ENCODE measurements at regions of chr3 and their contacts with region 1.

Region 1: DNA sequence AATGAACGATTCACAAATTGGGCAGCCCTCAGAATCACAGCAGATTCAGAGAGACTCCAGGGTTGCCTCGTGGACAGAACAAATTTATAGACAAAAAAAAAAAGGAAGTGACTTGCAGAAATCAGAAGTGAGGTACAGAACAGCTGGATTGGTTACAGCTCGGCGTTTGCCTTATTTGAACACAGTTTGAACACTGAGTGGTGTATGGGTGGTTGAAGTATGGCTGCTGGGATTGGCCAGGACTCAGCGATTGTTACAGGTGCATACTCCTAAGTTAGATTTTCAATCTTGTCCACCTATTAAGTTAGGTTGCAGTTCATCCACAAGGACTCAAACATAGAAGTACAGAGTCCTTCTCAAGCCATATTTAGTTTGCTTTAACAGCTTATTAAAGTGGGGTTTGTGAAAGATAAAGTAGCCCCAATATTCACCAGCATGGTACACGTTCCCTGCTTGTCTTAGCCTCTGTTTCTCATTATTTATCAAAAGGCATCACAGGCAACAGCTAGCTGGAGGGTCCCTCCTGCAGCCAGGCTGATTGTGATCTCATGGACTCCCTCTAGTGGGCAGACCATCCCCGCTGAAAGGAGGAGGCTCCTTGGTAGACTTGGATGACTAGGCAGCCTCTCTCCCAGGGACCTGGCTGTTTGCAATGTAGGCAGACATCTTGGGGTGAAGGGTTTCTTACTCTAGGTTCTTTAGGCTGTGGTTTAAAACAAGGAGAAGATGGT is 17.6 kb upstream of the ALDH1L1 start:
- DNase-seq: no peak
- ATAC-seq: peak; percentile 96
- H3K4me3 ChIP-seq: no peak overlapping the region
- H3K27ac ChIP-seq: no peak overlapping the region
- H3K4me1 ChIP-seq: no peaks in the 10 kb centered on the region
- H3K27me3 ChIP-seq: no peaks in the 10 kb centered on the region; a peak in 2 of 4 replicates
- CTCF ChIP-seq: peak; percentile 67 to 75 (median 75)
- EP300 ChIP-seq: no peak
- POLR2A ChIP-seq: no peak
- RAD21 ChIP-seq: peak; percentile 67

Region 2: GRCh38 chr3:125967138-125967537 is 230.9 kb before region 1 on chr3:
- CTCF ChIA-PET with region 1: interaction called, 10 read pairs
- POLR2A ChIA-PET with region 1: no interaction called
- RAD21 ChIA-PET with region 1: no interaction called
- SMC1A ChIA-PET with region 1: no interaction called
- in situ Hi-C with region 1: no loop called
- intact Hi-C with region 1: loop called (anchors 10 kb)
- DNase-seq: no peak
- ATAC-seq: no peak
- H3K4me3 ChIP-seq: no peak overlapping the region
- H3K27ac ChIP-seq: no peak overlapping the region
- H3K4me1 ChIP-seq: no peaks in the 10 kb centered on the region
- H3K27me3 ChIP-seq: peaks cover 0 to 4% of the 10 kb centered on the region in 2 experiments; a peak in 2 of 4 replicates
- CTCF ChIP-seq: no peak
- EP300 ChIP-seq: no peak
- POLR2A ChIP-seq: no peak
- RAD21 ChIP-seq: no peak

Region 3: DNA sequence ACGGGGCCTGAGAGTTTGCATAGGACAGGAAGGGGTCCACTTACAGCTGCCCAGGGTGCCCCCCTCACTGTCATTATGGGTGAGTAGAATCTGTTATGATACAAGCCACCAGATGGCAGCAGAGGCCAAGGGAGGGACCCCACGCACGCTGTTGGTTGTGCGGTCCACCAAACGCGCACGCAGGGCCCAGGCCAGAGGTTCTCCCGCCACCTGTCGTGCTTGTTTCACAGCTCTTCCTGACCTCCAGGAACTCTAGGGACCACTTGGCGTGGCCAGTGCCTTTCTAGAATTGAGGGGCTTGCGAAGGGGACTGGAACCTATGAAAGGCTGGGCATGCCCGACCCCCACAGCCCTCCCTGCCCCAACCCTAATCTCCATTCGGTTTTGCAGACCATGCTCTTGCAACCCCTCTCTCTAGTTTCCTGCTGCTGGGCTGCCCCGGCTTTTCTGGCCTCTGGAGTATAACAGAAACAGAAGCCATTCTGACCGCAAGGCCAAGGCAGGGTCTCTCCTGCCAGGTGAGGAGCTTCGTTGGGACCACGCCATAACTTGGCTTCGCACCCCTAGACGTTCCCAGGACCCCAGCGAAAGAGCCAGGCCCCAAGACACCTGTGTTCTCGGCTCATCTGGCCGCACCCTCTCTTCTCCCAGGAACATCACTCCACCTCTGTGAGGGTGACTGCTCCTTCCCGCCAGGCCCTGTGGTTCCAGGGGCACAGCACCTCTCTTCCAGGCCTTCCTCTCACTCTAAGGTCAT is 63.6 kb before region 1 on chr3:
- CTCF ChIA-PET with region 1: interaction called, 19 read pairs
- POLR2A ChIA-PET with region 1: no interaction called
- RAD21 ChIA-PET with region 1: interaction called, 12 read pairs
- SMC1A ChIA-PET with region 1: interaction called, 3 read pairs
- in situ Hi-C with region 1: no loop called
- intact Hi-C with region 1: no loop called
- DNase-seq: no peak
- ATAC-seq: peak; percentile 95
- H3K4me3 ChIP-seq: no peak overlapping the region
- H3K27ac ChIP-seq: no peak overlapping the region
- H3K4me1 ChIP-seq: no peaks in the 10 kb centered on the region
- H3K27me3 ChIP-seq: peaks cover 0 to 3% of the 10 kb centered on the region in 2 experiments; a peak in 1 of 4 replicates
- CTCF ChIP-seq: peak; percentile 53 to 74 (median 72); a peak in 5 of 6 replicates
- EP300 ChIP-seq: no peak
- POLR2A ChIP-seq: no peak
- RAD21 ChIP-seq: peak; percentile 66

Region 4: DNA sequence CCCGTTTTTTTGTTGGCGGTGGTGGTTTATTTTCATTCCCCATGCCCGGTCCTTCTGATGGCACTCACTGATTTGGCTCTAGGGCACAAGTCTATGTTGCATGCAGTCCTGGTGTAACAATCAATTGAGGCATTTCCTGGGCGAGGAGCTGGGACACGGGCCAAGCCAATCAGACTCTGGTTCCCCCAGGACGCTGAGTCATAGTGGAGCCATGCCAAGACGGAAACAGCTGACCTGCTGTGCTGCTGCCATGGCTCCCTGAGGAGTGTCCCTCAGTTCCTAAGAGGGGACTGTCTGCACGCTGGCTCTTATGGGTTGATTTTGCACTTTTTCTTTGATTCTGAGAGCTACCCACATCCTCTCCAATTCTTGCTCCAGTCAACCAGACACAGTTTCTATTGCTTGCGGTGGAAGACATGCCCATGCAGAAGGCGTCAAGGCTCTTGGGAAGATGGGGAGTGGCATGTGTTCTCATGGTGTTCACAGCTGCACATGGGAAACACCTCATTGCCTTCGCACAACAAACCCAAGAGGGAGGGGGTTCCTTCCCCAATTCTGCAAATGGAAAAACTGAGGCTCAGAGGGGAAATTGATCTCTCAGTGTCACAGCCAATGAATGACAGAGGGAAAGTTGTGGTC is 10.7 kb after region 1 on chr3:
- CTCF ChIA-PET with region 1: interaction called, 20 read pairs
- POLR2A ChIA-PET with region 1: no interaction called
- RAD21 ChIA-PET with region 1: no interaction called
- SMC1A ChIA-PET with region 1: interaction called, 3 read pairs
- in situ Hi-C with region 1: no loop called
- intact Hi-C with region 1: no loop called
- DNase-seq: no peak
- ATAC-seq: no peak
- H3K4me3 ChIP-seq: no peak overlapping the region
- H3K27ac ChIP-seq: no peak overlapping the region
- H3K4me1 ChIP-seq: no peaks in the 10 kb centered on the region
- H3K27me3 ChIP-seq: peaks cover 6 to 11% of the 10 kb centered on the region in 2 experiments
- CTCF ChIP-seq: no peak
- EP300 ChIP-seq: no peak
- POLR2A ChIP-seq: no peak
- RAD21 ChIP-seq: no peak

Region 5: GRCh38 chr3:126389112-126389793 is 191.2 kb after region 1 on chr3:
- CTCF ChIA-PET with region 1: interaction called, 3 read pairs
- POLR2A ChIA-PET with region 1: no interaction called
- RAD21 ChIA-PET with region 1: no interaction called
- SMC1A ChIA-PET with region 1: no interaction called
- in situ Hi-C with region 1: no loop called
- intact Hi-C with region 1: loop called (anchors 1 kb)
- DNase-seq: no peak
- ATAC-seq: peak; percentile 99
- H3K4me3 ChIP-seq: no peak overlapping the region
- H3K27ac ChIP-seq: no peak overlapping the region
- H3K4me1 ChIP-seq: peaks cover 13% of the 10 kb centered on the region
- H3K27me3 ChIP-seq: peaks cover 0 to 3% of the 10 kb centered on the region in 2 experiments; a peak in 2 of 4 replicates
- CTCF ChIP-seq: peak; percentile 77 to 99 (median 86)
- EP300 ChIP-seq: no peak
- POLR2A ChIP-seq: no peak
- RAD21 ChIP-seq: peak; percentile 68

Measured in GM12878 (cell line).